Naive thymus-derived CD4-positive, alpha-beta T cell (primary cell): ENCODE measurements at regions of chr13 and their contacts with region 1.

Region 1: DNA sequence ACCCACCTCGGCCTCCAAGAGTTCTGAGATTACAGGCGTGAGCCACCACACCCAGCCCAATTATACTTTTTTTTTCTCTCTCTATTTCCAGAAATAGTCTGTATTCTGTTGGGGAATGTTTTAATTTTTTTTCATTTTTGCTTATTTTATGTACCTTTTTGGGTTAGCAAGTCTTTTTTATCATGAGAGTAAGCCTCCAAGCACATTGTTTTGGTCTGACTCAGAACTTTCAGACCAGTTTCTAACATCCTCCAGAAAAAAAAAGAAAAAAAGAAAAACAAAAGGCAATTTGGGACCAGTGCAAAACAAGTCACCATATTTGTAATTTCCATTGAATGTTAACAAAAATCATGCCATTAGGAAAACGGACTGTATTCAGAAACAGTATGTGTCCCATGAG is 1465.5 kb downstream of the SLITRK5 start:
- DNase-seq: no peak
- ATAC-seq: no peak
- H3K4me3 ChIP-seq: no peak overlapping the region
- H3K4me3 Mint-ChIP-seq: no peak overlapping the region
- H3K27ac ChIP-seq: no peak overlapping the region
- H3K27ac Mint-ChIP-seq: no peak overlapping the region
- H3K4me1 ChIP-seq: no peaks in the 10 kb centered on the region
- H3K4me1 Mint-ChIP-seq: no peaks in the 10 kb centered on the region
- H3K27me3 ChIP-seq: no peaks in the 10 kb centered on the region
- H3K27me3 Mint-ChIP-seq: no peaks in the 10 kb centered on the region

Region 2: GRCh38 chr13:90792335-90792734 is 1655.7 kb after region 1 on chr13:
- CTCF ChIA-PET with region 1: no interaction called
- POLR2A ChIA-PET with region 1: interaction called, 11 read pairs
- intact Hi-C with region 1: no loop called
- DNase-seq: no peak
- ATAC-seq: no peak
- H3K4me3 ChIP-seq: no peak overlapping the region
- H3K4me3 Mint-ChIP-seq: no peak overlapping the region
- H3K27ac ChIP-seq: no peak overlapping the region
- H3K27ac Mint-ChIP-seq: no peak overlapping the region
- H3K4me1 ChIP-seq: no peaks in the 10 kb centered on the region
- H3K4me1 Mint-ChIP-seq: no peaks in the 10 kb centered on the region
- H3K27me3 ChIP-seq: no peaks in the 10 kb centered on the region
- H3K27me3 Mint-ChIP-seq: no peaks in the 10 kb centered on the region